HepG2 (cell line): ENCODE measurements at regions of chr9 and their contacts with region 1.

Region 1: GRCh38 chr9:32378993-32379729 is 5.3 kb upstream of the ACO1 start:
- DNase-seq: peak; percentile 85
- ATAC-seq: peak; percentile 74
- H3K4me3 ChIP-seq: no peak overlapping the region; a peak in 1 of 6 replicates
- H3K27ac ChIP-seq: no peak overlapping the region
- H3K4me1 ChIP-seq: peaks cover 30% of the 10 kb centered on the region
- H3K27me3 ChIP-seq: no peaks in the 10 kb centered on the region
- CTCF ChIP-seq: peak; percentile 94
- EP300 ChIP-seq: no peak
- POLR2A ChIP-seq: no peak
- RAD21 ChIP-seq: peak; percentile 86

Region 2: DNA sequence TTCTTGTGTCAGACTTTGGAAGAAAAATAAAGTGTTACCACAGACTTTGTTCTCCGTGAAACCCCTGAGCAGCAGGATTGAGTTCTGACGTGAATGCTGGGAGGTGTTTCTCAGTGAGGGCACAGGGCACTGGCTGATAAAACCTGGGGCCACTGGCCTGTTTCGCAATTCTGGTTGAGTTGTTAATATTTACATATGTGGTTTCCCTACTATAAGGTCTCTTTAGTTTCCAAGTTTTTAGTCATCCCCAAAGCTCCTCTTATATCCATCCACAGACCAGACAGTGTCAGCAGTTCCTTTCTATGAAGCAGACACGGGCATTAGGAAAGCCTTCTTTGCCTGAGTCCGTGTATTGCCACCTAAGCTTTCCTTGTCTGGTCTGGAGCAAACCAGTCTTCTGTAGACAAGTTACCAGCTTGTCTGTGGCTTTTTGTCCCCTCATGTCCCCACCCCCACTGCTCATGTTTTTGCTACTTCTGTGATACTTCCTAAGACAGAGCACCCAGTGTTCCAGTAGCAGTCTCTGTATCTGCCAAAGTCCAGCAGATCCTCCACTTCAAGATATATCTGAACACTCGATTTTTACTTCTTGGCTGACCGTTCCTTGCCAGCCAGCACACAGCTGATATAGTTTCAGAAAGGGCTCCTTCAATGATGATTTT is 47.2 kb after region 1 on chr9:
- CTCF ChIA-PET with region 1: interaction called, 68 read pairs
- POLR2A ChIA-PET with region 1: interaction called, 20 read pairs
- in situ Hi-C with region 1: loop called (anchors 5 kb)
- intact Hi-C with region 1: loop called (anchors 1 kb)
- DNase-seq: peak; percentile 92
- ATAC-seq: peak; percentile 96
- H3K4me3 ChIP-seq: peak overlapping the region in 2 of 3 experiments; percentile 25 to 40; a peak in 2 of 6 replicates
- H3K27ac ChIP-seq: peak overlapping the region; percentile 88
- H3K4me1 ChIP-seq: peaks cover 53% of the 10 kb centered on the region
- H3K27me3 ChIP-seq: no peaks in the 10 kb centered on the region
- CTCF ChIP-seq: no peak
- EP300 ChIP-seq: peak in 1 of 2 experiments; percentile 81; a peak in 3 of 4 replicates
- POLR2A ChIP-seq: peak in 1 of 2 experiments; percentile 27; a peak in 1 of 4 replicates
- RAD21 ChIP-seq: no peak

Region 3: DNA sequence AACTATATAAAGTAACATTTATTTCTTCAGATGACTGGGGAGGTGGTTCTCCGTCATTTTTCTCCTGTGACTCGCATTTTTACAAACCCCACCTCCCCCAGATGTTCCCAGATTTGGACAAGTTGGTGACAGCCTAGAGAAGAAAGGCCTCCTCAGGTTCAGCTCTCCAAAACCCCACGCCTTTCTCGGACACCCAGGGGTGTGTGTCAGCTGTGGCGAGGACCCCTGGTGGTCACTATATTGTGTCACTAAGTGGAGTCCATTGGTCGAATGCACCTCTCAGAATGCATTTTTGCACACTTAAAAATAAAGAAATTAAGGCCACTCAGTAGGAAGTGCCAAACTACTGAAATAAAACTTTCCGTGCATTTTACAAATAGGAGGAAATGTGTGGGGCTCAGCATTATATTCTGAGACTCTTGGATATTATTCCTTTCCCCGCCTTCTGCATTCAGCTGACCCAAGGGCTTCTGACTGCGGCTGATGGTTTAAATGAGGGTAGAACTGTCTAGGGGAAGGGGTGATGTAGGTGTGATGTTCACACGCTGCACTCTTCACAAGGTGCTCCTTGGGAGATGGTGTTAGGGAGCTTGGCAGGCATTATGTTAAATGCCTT is 52.9 kb after region 1 on chr9:
- CTCF ChIA-PET with region 1: interaction called, 68 read pairs
- POLR2A ChIA-PET with region 1: interaction called, 20 read pairs
- in situ Hi-C with region 1: loop called (anchors 5 kb)
- intact Hi-C with region 1: loop called (anchors 1 kb)
- DNase-seq: peak; percentile 33
- ATAC-seq: peak; percentile 93
- H3K4me3 ChIP-seq: no peak overlapping the region
- H3K27ac ChIP-seq: no peak overlapping the region
- H3K4me1 ChIP-seq: peaks cover 12% of the 10 kb centered on the region
- H3K27me3 ChIP-seq: no peaks in the 10 kb centered on the region
- CTCF ChIP-seq: peak; percentile 72
- EP300 ChIP-seq: no peak
- POLR2A ChIP-seq: no peak
- RAD21 ChIP-seq: peak; percentile 57

Region 4: DNA sequence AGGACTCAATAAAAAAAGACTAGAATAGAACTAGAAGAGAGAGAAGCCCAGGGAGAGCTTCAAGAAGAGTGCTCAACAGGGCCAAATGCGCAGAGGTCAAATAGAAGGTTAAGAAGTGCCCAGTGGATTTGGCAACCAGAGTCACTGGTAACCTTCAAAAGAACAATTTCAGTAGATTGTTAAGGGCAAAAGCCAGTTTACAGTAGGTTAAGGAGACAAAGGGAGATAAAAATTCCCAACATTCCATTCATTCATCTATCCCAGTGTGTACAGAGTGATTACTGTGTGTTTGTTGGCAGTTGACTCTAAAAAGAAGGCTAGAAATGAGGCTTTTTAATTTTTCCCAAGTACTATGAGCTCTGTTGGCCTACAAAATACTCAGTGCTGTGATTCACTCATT is 77.4 kb after region 1 on chr9:
- CTCF ChIA-PET with region 1: no interaction called
- POLR2A ChIA-PET with region 1: no interaction called
- in situ Hi-C with region 1: no loop called
- intact Hi-C with region 1: loop called (anchors 1 kb)
- DNase-seq: peak; percentile 82
- ATAC-seq: peak; percentile 96
- H3K4me3 ChIP-seq: no peak overlapping the region
- H3K27ac ChIP-seq: peak overlapping the region; percentile 66
- H3K4me1 ChIP-seq: peaks cover 28% of the 10 kb centered on the region
- H3K27me3 ChIP-seq: no peaks in the 10 kb centered on the region
- CTCF ChIP-seq: no peak
- EP300 ChIP-seq: peak; percentile 24 to 81; a peak in 2 of 4 replicates
- POLR2A ChIP-seq: no peak
- RAD21 ChIP-seq: no peak

Region 5: GRCh38 chr9:32571969-32572899 is 193.1 kb after region 1 on chr9:
- CTCF ChIA-PET with region 1: interaction called, 52 read pairs
- POLR2A ChIA-PET with region 1: interaction called, 22 read pairs
- in situ Hi-C with region 1: loop called (anchors 5 kb)
- intact Hi-C with region 1: loop called (anchors 1 kb)
- DNase-seq: peak; percentile 83
- ATAC-seq: peak; percentile 96
- H3K4me3 ChIP-seq: peak overlapping the region; percentile 81 to 95 (median 83)
- H3K27ac ChIP-seq: peak overlapping the region; percentile 77
- H3K4me1 ChIP-seq: peaks cover 24% of the 10 kb centered on the region
- H3K27me3 ChIP-seq: no peaks in the 10 kb centered on the region; a peak in 1 of 5 replicates
- CTCF ChIP-seq: peak; percentile 78
- EP300 ChIP-seq: no peak
- POLR2A ChIP-seq: no peak
- RAD21 ChIP-seq: peak; percentile 26; the same call in 1 of the 2 replicates

Region 6: GRCh38 chr9:32579706-32580331 is 200.7 kb after region 1 on chr9:
- CTCF ChIA-PET with region 1: interaction called, 115 read pairs
- POLR2A ChIA-PET with region 1: interaction called, 4 read pairs
- in situ Hi-C with region 1: no loop called
- intact Hi-C with region 1: loop called (anchors 1 kb)
- DNase-seq: peak; percentile 38
- ATAC-seq: peak; percentile 51
- H3K4me3 ChIP-seq: no peak overlapping the region
- H3K27ac ChIP-seq: no peak overlapping the region
- H3K4me1 ChIP-seq: peaks cover 18% of the 10 kb centered on the region
- H3K27me3 ChIP-seq: no peaks in the 10 kb centered on the region
- CTCF ChIP-seq: peak; percentile 78
- EP300 ChIP-seq: no peak
- POLR2A ChIP-seq: no peak
- RAD21 ChIP-seq: peak; percentile 40

Region 7: GRCh38 chr9:32968101-32969011 is 589.2 kb after region 1 on chr9:
- CTCF ChIA-PET with region 1: interaction called, 14 read pairs
- POLR2A ChIA-PET with region 1: no interaction called
- in situ Hi-C with region 1: loop called (anchors 5 kb)
- intact Hi-C with region 1: loop called (anchors 1 kb)
- DNase-seq: peak; percentile 29
- ATAC-seq: no peak
- H3K4me3 ChIP-seq: no peak overlapping the region
- H3K27ac ChIP-seq: no peak overlapping the region
- H3K4me1 ChIP-seq: no peaks in the 10 kb centered on the region
- H3K27me3 ChIP-seq: no peaks in the 10 kb centered on the region
- CTCF ChIP-seq: peak; percentile 66
- EP300 ChIP-seq: no peak
- POLR2A ChIP-seq: no peak
- RAD21 ChIP-seq: peak; percentile 37; the same call in 1 of the 2 replicates